WTC11 (cell line): ENCODE measurements at regions of chr6 and their contacts with region 1.

Region 1: GRCh38 chr6:34145161-34146020 is 496 bp downstream of the GRM4 start:
- DNase-seq: peak; percentile 70
- ATAC-seq: peak; percentile 27
- H3K4me3 Mint-ChIP-seq: peak overlapping the region; percentile 76
- H3K27ac Mint-ChIP-seq: no peak overlapping the region
- H3K4me1 Mint-ChIP-seq: peaks cover 76% of the 10 kb centered on the region
- H3K27me3 Mint-ChIP-seq: peaks cover 42% of the 10 kb centered on the region
- CTCF ChIP-seq: no peak

Region 2: DNA sequence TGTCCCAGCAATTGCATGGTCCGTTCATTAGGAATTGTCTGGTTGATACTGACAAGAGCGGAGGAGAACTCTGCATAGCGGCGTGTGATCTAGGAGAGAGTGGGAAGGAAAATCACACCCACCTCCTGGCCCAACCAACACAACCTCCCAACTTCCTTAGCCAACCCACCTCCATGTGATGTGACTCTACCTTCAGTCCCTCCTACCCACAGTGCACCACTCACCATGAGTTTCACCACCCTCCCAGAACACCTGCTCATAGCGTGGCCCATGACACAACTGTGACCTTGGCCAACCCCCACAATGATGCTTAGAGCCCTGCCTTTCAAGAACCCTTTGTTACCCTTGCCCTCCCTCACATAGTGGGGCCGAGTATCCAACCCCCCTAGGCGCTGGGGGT is 881.4 kb before region 1 on chr6:
- CTCF ChIA-PET with region 1: no interaction called
- POLR2A ChIA-PET with region 1: no interaction called
- DNase-seq: no peak
- ATAC-seq: no peak
- H3K4me3 Mint-ChIP-seq: no peak overlapping the region
- H3K27ac Mint-ChIP-seq: no peak overlapping the region
- H3K4me1 Mint-ChIP-seq: no peaks in the 10 kb centered on the region
- H3K27me3 Mint-ChIP-seq: no peaks in the 10 kb centered on the region
- CTCF ChIP-seq: no peak

Region 3: DNA sequence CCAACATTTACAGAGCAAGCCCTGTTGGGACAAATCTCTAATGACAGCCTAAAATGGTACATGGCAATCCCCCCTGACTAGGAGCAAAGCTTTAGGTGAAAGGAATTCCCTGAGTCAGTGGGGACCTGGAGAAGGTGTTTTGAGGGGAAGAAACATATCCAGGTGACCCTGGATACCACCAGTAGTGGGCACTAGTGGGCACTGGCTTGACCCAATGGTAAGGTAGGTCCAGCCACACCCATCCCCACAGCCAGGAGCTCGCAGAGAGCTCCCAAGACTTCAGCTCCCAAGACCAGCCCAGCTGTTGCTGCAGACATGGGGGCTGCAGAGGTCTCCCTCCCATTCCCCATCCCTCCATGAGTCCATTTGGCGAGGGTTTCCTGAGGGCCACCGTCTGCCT is 19.0 kb before region 1 on chr6:
- CTCF ChIA-PET with region 1: interaction called, 35 read pairs
- POLR2A ChIA-PET with region 1: interaction called, 19 read pairs
- DNase-seq: no peak
- ATAC-seq: no peak
- H3K4me3 Mint-ChIP-seq: no peak overlapping the region
- H3K27ac Mint-ChIP-seq: no peak overlapping the region
- H3K4me1 Mint-ChIP-seq: peaks cover 56% of the 10 kb centered on the region
- H3K27me3 Mint-ChIP-seq: no peaks in the 10 kb centered on the region
- CTCF ChIP-seq: no peak

Region 4: DNA sequence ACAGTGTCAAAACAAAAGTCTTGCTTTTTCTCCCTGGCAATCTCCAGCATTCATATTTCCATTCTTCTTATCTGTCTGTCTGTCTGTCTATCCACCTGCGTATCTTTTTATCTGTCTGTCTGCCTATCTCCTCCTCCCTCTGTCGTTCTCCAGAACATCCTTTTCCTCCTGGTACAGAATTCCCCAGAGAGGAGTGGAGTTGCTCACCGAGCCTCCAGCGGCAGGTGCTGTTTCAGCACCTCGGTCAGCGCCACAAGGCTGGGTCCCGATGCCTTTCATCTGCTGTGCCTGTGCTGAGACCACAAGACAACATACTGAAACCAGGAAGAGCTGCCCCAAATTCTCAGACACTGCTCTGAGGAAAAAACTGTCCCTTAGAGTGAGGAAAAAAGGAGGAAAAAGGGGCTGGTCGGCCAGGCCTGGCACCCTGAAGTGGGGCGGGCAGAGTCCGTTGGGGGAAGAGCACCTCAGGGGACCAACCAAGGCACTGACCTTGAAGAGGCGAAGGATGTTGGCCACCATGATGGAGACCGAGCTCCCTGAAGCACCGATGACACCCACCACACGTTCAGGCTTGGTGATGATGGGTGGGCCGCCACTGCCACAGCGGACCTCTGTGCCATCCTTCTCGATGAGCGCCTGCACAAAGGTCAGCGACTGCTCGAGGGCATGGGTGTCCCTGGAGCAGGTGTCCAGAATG is 12.8 kb before region 1 on chr6:
- CTCF ChIA-PET with region 1: interaction called, 35 read pairs
- POLR2A ChIA-PET with region 1: interaction called, 19 read pairs
- DNase-seq: peak; percentile 89
- ATAC-seq: peak; percentile 29
- H3K4me3 Mint-ChIP-seq: peak overlapping the region; percentile 64
- H3K27ac Mint-ChIP-seq: peak overlapping the region; percentile 96
- H3K4me1 Mint-ChIP-seq: peaks cover 86% of the 10 kb centered on the region
- H3K27me3 Mint-ChIP-seq: no peaks in the 10 kb centered on the region
- CTCF ChIP-seq: no peak

Region 5: DNA sequence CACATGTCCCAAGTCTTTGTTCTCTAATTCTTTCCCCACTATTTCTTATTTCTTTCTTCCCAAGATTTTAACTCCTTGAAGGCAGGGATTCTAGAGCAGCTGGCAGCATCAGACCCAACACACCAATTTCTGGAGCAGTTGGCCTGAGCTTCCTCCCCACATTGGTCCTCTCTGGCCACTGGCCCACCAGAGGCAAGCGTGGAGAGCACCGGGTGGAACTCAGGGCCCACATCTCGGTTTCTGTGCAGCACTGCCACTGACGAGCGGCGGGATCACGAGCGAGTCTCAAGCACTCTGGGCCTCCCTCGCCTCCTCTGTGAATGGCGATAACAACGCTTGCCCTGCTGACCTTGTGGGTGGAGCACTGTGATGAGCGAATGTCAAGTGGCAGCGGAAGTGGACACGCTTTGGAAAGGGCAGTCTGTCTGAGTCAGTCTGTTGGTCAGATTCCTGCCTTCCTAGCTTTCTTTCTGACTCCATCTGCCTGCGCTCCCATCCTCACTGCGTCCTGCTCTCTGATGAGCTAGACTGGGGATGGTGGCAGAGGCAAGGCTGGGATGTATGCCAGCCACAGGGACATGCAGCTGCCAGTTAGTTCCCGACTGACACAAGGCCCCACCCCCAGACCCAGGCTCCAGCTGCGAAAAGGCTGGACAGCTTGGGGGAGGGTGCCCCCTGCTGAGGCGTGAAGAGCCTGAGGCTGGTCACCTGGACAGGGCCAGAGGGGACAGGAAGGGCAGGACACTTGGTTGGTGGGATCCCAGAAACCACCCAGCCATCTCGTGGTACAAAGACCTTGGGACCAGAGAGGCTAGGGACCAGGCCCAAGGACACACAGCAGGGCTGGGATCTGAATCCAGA is 415.2 kb after region 1 on chr6:
- CTCF ChIA-PET with region 1: no interaction called
- POLR2A ChIA-PET with region 1: no interaction called
- DNase-seq: peak; percentile 39
- ATAC-seq: no peak
- H3K4me3 Mint-ChIP-seq: no peak overlapping the region
- H3K27ac Mint-ChIP-seq: peak overlapping the region; percentile 11; the same call in 1 of the 2 replicates
- H3K4me1 Mint-ChIP-seq: peaks cover 14% of the 10 kb centered on the region
- H3K27me3 Mint-ChIP-seq: no peaks in the 10 kb centered on the region; the same call in 1 of the 2 replicates
- CTCF ChIP-seq: no peak